ENCODE measurements at regions of chrX and their contacts with region 1.

Region 1: DNA sequence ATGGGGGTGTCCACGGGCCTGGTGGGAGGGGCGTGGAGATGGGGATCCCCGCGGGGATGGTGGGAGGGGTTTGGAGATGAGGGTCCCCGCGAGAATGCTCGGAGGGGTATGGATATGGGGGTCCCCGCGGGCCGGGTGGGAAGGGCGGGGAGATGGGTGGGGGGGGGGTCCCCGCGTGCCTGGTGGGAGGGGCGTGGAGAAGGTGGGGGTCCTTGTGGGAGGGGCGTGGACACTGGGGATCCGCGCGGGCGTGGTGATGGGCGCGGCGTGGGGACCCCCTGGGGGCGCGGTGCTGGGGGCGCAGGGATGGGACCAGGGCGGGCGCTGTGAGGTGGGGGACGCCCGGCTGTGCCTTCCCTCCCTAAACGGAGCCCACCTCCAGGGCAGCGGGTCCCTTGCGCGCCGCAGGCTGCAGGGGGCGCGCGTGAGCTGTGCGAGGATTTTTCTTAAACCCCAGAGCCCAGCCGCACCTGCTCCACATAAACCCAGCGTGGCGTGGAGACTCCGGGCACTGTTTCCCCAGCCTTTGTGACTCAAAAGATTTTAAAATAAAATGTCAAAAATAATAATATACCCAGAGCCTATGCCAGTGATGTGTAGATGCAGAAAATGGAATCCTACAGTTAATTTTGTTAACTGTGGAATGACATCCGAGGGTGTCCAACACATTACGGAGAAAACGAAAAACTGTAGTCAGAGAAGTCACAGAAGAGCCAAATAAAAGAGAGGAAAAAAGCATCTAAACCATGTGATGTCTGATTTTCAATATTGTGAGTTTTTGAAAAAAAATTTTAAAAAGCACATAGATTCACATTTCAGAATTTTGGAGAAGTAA is 1.5 kb upstream of the ASMTL start:
- H3K4me3 Mint-ChIP-seq: peak overlapping the region; percentile 69
- H3K27ac Mint-ChIP-seq: peak overlapping the region; percentile 97
- H3K4me1 Mint-ChIP-seq: peaks cover 31% of the 10 kb centered on the region
- H3K27me3 Mint-ChIP-seq: peaks cover 6% of the 10 kb centered on the region

Region 2: GRCh38 chrX:936979-937769 is 517.0 kb before region 1 on chrX:
- intact Hi-C with region 1: no loop called
- H3K4me3 Mint-ChIP-seq: no peak overlapping the region
- H3K27ac Mint-ChIP-seq: no peak overlapping the region
- H3K4me1 Mint-ChIP-seq: no peaks in the 10 kb centered on the region
- H3K27me3 Mint-ChIP-seq: peaks cover 19% of the 10 kb centered on the region

Region 3: GRCh38 chrX:1391707-1392375 is 62.3 kb before region 1 on chrX and contains the start of gene SLC25A6:
- intact Hi-C with region 1: loop called (anchors 1 kb)
- H3K4me3 Mint-ChIP-seq: peak within 1 kb of the TSS; percentile 97
- H3K27ac Mint-ChIP-seq: peak within 1 kb of the TSS; percentile 99
- H3K4me1 Mint-ChIP-seq: peaks cover 72% of the 10 kb centered on the region
- H3K27me3 Mint-ChIP-seq: no peaks in the 10 kb centered on the region

Region 4: DNA sequence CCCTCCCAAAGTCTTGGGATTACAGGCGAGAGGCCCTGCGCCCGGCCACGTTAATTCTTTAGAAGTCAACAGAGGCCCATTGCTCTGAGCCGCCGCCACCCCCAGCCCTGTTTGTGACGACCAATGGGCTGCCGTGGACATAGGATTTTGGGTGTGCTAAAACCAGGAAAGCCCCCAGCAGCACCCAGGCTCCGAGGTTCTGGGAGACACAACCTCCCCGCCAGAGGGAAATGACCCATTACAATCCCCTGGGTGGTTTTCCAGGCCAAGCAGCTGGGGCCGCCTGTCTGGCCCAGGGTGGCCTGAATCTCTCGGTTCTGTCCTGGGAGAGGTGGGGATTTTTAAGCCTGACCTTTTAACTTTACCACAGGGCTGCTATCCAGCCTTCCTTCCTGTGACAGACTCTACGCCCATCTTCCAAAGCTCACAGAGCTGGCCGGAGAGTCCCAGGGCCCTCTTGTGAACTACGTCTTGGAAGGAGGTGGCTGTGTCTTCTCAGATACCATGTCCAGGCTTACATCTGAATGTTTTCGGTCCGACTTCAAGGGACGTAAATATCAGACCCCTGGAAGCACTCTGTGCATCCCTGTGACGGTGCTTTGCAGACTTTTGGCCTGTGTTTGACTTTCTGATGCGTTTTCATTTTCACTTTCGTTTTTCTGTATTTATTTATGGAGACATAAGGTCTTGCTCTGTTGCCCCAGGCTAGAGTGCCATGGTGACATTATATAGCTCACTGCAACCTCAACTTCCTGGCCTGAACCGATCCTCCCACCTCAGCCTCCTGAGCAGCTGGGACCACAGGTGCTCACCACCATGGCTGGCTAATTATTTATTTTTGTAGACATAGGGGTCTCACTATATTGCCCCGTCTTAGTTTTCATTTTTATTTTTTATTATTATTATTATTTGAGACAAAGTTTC is 46.8 kb after region 1 on chrX:
- intact Hi-C with region 1: loop called (anchors 2 kb)
- H3K4me3 Mint-ChIP-seq: no peak overlapping the region
- H3K27ac Mint-ChIP-seq: peak overlapping the region; percentile 50
- H3K4me1 Mint-ChIP-seq: peaks cover 34% of the 10 kb centered on the region
- H3K27me3 Mint-ChIP-seq: peaks cover 3% of the 10 kb centered on the region

Region 5: DNA sequence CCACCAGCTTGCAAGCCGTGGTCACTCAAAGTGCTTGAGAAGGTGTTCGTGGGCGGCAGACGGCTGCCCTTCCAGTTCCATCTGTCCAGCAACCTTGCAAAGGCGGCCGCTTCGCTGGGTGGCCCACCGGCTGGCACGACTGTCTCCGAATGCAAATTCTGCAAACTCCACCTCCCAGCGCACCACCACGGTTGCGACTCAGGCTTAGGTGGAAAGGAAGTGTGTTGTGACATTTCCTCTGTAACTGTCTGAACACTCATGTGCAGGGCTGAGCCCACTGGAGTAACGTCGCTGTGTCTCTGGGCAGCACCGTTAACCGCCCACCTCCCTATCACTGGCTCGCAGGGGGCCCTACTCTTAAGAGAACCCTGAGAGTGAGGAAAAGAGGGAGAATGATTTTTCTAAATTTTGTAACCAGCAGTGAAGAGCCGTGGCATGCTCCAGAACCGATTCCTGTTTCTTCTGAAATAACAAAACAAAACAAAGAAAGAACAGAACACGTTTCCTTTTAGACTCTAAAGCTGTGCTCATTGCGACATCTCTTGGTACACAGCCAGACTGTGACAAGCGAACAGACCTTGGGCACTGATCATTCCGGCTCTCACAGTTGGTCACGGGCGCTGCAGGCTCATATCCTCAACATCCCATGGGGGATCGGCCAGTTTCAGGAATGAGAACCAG is 83.0 kb after region 1 on chrX and contains the start of gene P2RY8:
- intact Hi-C with region 1: loop called (anchors 1 kb)
- H3K4me3 Mint-ChIP-seq: peak within 1 kb of the TSS; percentile 76
- H3K27ac Mint-ChIP-seq: peak within 1 kb of the TSS; percentile 88
- H3K4me1 Mint-ChIP-seq: peaks cover 37% of the 10 kb centered on the region
- H3K27me3 Mint-ChIP-seq: no peaks in the 10 kb centered on the region

Region 6: DNA sequence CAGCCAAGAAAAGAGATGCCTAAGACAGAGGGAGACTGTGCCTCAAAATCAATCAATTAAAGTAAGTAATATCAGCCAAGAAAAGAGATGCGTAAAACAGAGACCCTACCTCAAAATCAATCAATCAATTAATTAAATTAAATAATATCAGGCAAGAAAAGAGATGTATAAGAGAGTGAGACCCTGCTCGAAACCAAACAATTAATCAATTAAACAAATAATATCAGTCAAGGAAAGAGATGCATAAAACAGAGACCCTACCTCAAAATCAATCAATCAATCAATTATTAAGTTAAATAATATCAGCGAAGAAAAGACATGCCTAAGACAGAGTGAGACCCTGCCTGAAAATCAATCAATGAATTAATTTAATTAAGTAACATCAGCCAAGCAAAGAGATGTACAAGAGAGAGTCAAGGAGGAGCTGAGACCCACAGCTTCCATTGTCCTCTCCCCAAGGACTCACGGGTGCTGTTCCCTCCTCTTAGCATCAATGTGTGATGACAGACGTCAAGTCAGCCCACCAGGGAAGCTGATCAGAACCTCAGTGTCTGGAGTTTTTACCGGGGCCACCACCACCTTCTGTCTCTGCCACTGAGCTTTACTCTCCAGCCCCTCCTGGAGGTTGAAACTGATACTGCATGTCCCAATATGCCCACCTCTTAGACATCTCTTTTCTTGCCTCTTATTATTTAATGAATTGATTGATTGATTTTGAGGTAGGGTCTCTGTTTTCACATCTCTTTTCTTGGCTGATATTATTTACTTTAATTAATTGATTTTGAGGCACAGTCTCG is 126.8 kb after region 1 on chrX:
- intact Hi-C with region 1: loop called (anchors 1 kb)
- H3K4me3 Mint-ChIP-seq: no peak overlapping the region
- H3K27ac Mint-ChIP-seq: no peak overlapping the region
- H3K4me1 Mint-ChIP-seq: peaks cover 13% of the 10 kb centered on the region
- H3K27me3 Mint-ChIP-seq: no peaks in the 10 kb centered on the region

Region 7: DNA sequence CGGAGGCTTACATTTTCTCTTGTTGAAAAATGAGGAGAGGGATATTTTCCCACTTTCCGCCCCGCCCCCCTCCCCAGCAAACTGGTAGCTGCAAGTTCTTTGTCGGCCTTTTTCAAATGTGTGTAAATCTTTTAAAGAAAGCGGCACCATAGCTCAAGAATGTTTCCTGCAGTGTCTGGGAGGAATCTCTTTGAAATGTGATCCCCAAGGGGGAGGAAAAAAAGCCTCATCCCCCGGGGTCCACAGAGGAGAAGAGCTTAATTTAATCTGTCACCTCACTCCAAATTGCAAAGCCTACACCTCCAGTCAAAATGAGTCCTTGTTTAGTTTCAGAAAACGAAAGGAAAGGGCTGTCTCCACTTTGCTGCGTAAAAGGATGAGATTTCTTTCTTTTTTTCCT is 195.5 kb after region 1 on chrX:
- intact Hi-C with region 1: no loop called
- H3K4me3 Mint-ChIP-seq: no peak overlapping the region
- H3K27ac Mint-ChIP-seq: no peak overlapping the region
- H3K4me1 Mint-ChIP-seq: no peaks in the 10 kb centered on the region
- H3K27me3 Mint-ChIP-seq: peaks cover 10% of the 10 kb centered on the region

Region 8: DNA sequence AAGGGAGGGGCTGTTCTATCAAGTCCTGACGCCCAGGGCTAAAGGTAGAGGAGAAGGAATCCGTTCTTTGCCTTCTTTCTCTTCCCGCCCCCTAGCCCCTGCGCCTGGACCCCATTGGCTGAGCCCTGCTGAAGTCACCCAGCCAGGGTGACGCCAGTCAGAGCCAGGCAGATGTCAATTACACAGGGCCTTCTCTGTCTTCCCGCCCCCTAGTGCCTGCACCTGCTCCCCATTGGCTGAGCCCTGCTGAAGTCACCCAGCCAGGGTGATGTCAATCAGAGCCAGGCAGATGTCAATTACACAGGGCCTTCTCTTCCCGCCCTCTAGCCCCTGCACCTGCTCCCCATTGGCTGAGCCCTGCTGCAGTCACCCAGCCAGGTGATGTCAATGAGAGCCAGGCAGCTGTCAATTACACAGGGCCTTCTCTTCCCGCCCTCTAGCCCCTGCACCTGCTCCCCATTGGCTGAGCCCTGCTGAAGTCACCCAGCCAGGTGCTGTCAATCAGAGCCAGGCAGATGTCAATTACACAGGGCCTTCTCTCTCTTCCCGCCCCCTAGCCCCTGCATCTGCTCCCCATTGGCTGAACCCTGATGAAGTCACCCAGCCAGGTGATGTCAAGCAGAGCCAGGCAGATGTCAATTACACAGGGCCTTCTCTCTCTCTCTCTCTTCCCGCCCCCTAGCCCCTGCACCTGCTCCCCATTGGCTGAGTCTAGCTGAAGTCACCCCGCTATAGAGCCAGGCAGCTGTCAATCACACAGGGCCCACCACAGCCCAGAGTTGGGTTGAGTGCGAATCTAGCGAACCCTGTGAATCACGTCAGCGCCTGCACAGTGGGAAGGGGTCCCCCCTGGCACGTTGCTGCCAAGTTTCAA is 207.1 kb after region 1 on chrX:
- intact Hi-C with region 1: loop called (anchors 5 kb)
- H3K4me3 Mint-ChIP-seq: peak overlapping the region; percentile 67
- H3K27ac Mint-ChIP-seq: peak overlapping the region; percentile 72
- H3K4me1 Mint-ChIP-seq: peaks cover 27% of the 10 kb centered on the region
- H3K27me3 Mint-ChIP-seq: no peaks in the 10 kb centered on the region